ENCODE measurements at regions of chr15 and their contacts with region 1.

Region 1: DNA sequence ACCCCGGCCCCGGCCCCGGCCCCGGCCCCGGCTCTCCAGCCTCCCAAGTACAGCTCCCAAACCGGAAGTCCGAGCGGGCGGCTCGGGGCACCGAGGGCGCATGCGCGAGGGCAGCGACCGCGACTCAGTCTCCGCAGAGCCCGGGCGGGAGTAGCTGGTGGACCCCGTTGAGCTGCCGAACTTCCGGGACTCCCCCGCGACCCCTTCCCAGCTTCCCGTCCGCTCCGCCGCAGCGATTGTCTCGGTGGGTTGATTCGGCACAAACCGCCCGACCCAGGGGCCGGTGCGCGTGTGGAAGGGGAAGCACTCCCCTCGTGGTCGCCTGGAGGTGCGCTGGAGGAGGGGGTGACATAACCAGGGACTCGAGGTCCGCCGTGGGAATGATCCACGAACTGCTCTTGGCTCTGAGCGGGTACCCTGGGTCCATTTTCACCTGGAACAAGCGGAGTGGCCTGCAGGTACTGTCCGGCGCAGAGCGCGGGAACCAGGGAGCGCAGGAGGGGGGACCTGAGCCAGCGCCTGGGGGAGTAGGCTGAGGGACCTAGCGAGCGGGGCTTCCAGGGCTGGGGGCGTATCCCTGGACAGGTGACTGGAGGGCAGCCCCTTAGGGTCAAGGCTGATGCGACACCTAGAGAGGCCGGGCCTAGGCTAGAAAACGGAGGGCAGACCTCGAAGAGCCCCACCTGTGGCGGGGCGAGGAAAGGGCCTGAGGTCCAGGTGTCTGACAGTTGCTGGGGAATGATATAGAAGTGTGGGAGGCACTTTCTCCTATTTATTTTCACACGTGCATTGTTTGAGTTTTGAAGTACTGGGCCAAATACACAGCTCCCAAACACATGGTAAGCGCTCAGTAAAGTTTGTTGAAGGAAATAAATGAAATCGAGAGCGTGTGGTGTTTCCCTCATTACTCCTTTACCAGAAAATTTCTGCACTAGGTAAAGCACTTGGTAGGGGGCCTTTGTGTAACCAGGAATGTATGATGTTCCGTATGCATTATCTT is at the starts of genes TUBGCP4 and ZSCAN29:
- DNase-seq: peak; percentile 83
- ATAC-seq: peak; percentile 82
- H3K4me3 Mint-ChIP-seq: peak within 1 kb of the TSS; percentile 93
- H3K27ac Mint-ChIP-seq: peak within 1 kb of the TSS; percentile 87
- H3K4me1 Mint-ChIP-seq: peaks cover 58% of the 10 kb centered on the region
- H3K27me3 Mint-ChIP-seq: no peaks in the 10 kb centered on the region
- CTCF ChIP-seq: no peak
- total RNA-seq, gene TUBGCP4: 24.0 and 31.2 TPM in 2 replicates
- total RNA-seq, gene ZSCAN29: 45.6 and 50.6 TPM in 2 replicates

Region 2: DNA sequence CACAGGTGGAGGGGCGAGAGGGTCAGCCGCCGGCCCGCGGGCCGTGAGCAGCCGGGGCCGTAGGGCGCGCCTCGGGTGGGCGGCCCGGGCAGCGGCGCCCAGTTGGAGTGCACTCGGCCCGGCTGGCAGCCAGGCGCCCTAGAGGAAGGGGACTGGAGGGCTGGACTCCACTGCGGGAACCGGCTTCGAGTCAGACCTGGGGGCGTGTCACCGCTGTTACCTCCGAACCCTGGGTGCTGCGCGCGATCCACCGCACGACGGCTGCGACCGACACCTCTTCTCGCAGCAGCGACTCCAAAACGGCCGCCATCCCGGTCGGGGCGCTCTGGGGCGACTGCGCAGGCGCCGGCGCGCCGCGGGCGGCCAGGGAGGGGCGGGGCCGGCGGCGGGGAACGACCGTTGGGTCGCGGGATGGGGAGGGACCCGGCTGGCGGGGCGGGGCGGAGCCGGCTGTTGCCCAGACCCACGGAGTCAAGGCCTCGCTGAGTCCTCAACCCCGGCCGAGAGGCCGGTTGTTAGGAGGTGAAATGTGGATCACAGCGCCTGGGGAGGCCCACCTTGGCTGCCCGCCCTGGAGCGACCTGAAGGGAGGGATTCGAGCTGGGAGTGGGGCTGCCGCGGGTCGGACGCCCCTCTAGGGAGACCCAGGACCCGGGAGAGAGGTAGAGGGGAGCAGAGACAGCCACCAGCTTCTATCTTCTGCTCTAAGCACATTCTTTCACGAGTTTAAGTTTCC is 634.3 kb before region 1 on chr15 and contains the start of gene CDAN1:
- CTCF ChIA-PET with region 1: no interaction called
- POLR2A ChIA-PET with region 1: no interaction called
- intact Hi-C with region 1: loop called (anchors 2 kb)
- DNase-seq: peak; percentile 92
- ATAC-seq: peak; percentile 96
- H3K4me3 Mint-ChIP-seq: peak within 1 kb of the TSS; percentile 83
- H3K27ac Mint-ChIP-seq: peak within 1 kb of the TSS; percentile 61
- H3K4me1 Mint-ChIP-seq: peaks cover 13% of the 10 kb centered on the region
- H3K27me3 Mint-ChIP-seq: no peaks in the 10 kb centered on the region
- CTCF ChIP-seq: no peak
- total RNA-seq, gene CDAN1: 14.6 and 15.6 TPM in 2 replicates

Region 3: DNA sequence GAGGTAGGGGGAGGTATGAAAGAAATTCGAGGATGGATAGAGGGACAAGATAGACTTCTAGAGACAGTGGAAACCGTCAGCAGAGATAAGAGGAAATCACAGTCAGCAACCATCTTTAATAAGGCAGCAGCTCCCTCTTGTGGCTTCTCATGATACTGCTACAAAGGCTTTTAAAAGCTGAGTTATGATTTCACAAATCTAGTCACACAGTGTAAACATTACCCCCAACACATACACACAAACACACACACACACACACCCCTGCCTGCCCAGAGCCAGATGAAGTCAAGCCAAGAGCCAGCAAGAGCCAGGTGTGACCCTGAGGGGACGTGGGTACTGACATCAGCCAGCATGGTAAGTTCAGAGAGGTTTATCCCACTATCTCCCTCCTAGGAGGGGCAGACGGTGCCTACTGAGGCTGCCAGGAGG is 85.7 kb before region 1 on chr15:
- CTCF ChIA-PET with region 1: no interaction called
- POLR2A ChIA-PET with region 1: no interaction called
- intact Hi-C with region 1: no loop called
- DNase-seq: no peak
- ATAC-seq: peak; percentile 75
- H3K4me3 Mint-ChIP-seq: no peak overlapping the region
- H3K27ac Mint-ChIP-seq: no peak overlapping the region
- H3K4me1 Mint-ChIP-seq: peaks cover 14% of the 10 kb centered on the region
- H3K27me3 Mint-ChIP-seq: peaks cover 2% of the 10 kb centered on the region
- CTCF ChIP-seq: peak; percentile 56

Region 4: DNA sequence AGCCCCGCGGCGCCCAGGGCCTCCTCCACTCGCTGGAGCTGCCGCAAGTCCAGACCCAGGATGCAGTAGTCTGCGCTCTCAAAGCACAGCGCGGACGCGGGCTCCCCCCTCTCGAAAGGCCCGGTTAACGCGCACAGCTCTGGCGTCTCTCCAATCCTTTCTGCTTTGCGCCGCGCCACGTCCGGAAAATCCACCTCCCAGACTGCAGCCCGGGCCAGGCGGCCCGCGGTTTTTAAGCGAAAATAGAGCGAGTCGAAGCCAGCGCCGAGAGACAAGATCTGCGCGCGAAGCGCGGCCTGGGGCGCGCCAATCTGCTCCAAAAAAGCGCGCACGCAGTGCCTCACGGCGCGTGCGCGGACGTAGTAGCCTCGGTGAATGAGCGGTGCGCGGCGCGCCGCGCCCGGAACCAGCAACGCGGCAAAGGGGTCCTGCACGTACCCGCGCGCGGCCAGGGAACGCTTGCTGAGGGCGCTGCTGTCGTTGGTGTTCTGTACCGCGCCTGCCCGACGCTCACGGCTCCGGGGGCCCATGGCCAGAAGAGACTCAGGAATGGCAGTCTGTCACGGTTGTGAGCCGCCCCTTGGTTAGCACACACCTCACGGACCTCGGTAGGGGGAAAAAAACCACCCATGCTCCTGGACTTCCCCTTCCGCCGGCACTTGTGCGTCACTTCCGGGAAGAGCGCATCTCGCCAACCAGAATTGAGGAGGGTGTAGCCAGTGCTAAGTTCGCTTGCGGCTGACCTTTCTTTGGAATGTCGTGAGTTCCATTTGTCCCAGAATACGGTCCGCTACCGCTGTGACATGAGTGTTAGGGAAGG is 41.1 kb before region 1 on chr15 and contains the start of gene LCMT2:
- CTCF ChIA-PET with region 1: interaction called, 3 read pairs
- POLR2A ChIA-PET with region 1: interaction called, 5 read pairs
- intact Hi-C with region 1: loop called (anchors 2 kb)
- DNase-seq: peak; percentile 85
- ATAC-seq: peak; percentile 85
- H3K4me3 Mint-ChIP-seq: peak within 1 kb of the TSS; percentile 97
- H3K27ac Mint-ChIP-seq: peak within 1 kb of the TSS; percentile 99
- H3K4me1 Mint-ChIP-seq: peaks cover 32% of the 10 kb centered on the region
- H3K27me3 Mint-ChIP-seq: no peaks in the 10 kb centered on the region
- CTCF ChIP-seq: no peak
- total RNA-seq, gene LCMT2: 15.5 and 17.1 TPM in 2 replicates

Region 5: DNA sequence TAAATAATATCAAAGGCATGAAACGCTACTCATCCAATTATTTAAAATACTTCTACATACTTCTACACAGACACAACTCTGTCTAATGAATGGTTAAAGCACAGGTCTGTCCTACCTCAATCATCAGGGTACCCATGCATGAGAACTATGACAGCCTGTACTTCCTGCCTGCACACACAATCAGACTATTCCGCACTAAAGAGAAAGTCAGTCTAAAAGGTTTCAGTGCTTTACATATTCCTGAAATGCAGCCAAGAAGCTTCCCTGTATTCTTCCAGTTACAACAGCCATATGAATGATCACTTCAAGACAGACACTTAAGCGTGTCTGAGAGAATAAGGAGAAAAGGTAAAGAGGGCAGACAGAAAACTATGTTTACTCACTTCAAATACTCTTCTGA is 58.4 kb after region 1 on chr15:
- CTCF ChIA-PET with region 1: no interaction called
- POLR2A ChIA-PET with region 1: no interaction called
- intact Hi-C with region 1: no loop called
- DNase-seq: no peak
- ATAC-seq: no peak
- H3K4me3 Mint-ChIP-seq: no peak overlapping the region
- H3K27ac Mint-ChIP-seq: no peak overlapping the region
- H3K4me1 Mint-ChIP-seq: peaks cover 3% of the 10 kb centered on the region
- H3K27me3 Mint-ChIP-seq: no peaks in the 10 kb centered on the region
- CTCF ChIP-seq: no peak

Region 6: GRCh38 chr15:43492673-43493601 is 121.7 kb after region 1 on chr15 and contains the start of gene TP53BP1:
- CTCF ChIA-PET with region 1: no interaction called
- POLR2A ChIA-PET with region 1: no interaction called
- intact Hi-C with region 1: loop called (anchors 5 kb)
- DNase-seq: peak; percentile 87
- ATAC-seq: peak; percentile 99
- H3K4me3 Mint-ChIP-seq: peak within 1 kb of the TSS; percentile 98
- H3K27ac Mint-ChIP-seq: peak within 1 kb of the TSS; percentile 95
- H3K4me1 Mint-ChIP-seq: peaks cover 19% of the 10 kb centered on the region
- H3K27me3 Mint-ChIP-seq: no peaks in the 10 kb centered on the region
- CTCF ChIP-seq: no peak
- total RNA-seq, gene TP53BP1: 53.9 and 54.6 TPM in 2 replicates

Region 7: GRCh38 chr15:43991206-43991605 is 619.9 kb after region 1 on chr15:
- CTCF ChIA-PET with region 1: no interaction called
- POLR2A ChIA-PET with region 1: no interaction called
- intact Hi-C with region 1: no loop called
- DNase-seq: no peak
- ATAC-seq: no peak
- H3K4me3 Mint-ChIP-seq: no peak overlapping the region
- H3K27ac Mint-ChIP-seq: no peak overlapping the region
- H3K4me1 Mint-ChIP-seq: peaks cover 3% of the 10 kb centered on the region
- H3K27me3 Mint-ChIP-seq: peaks cover 4% of the 10 kb centered on the region
- CTCF ChIP-seq: no peak

Region 8: GRCh38 chr15:44633603-44634002 is 1262.3 kb after region 1 on chr15:
- CTCF ChIA-PET with region 1: no interaction called
- POLR2A ChIA-PET with region 1: interaction called, 12 read pairs
- intact Hi-C with region 1: no loop called
- DNase-seq: no peak
- ATAC-seq: no peak
- H3K4me3 Mint-ChIP-seq: peak overlapping the region; percentile 35
- H3K27ac Mint-ChIP-seq: peak overlapping the region; percentile 82
- H3K4me1 Mint-ChIP-seq: peaks cover 8% of the 10 kb centered on the region
- H3K27me3 Mint-ChIP-seq: no peaks in the 10 kb centered on the region
- CTCF ChIP-seq: no peak

Measured in activated B cell treated with CpG ODN at 0.5 μM for 24 hours (primary cell).